Activated naive CD4-positive, alpha-beta T cell treated with anti-CD3 and anti-CD28 coated beads for 36 hours (primary cell): ENCODE measurements at regions of chr2 and their contacts with region 1.

Region 1: DNA sequence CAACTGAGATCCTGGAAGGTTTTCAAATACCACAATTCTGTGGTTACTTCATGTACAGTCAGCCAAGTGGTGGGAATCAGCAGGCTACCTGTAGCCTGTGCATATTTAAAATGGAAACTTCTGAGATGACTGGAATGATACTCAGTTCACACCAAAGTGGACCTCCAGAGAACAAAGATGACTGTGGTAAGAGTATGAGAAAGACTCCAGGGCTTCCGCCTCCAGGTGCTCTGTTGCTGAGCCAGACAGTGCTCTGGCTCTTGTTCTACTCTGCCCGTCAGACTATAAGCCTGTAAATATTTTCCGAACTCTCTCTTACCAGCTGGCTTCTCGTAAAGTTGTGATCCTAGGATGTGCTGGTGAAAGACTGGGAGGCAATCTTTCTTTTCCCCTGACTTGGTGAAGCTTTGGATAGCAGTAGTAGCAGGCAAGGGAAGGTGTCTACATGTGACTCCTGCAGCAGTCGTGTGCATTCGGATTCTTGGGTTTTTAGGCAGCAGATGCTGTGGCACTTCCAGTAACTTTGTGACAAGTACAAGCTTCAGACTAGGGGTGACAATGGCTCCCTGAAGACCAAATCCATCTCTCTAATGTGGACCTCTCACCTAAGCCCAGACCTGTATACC is 23.1 kb downstream of the ST3GAL5 start:
- DNase-seq: peak; percentile 42
- H3K4me3 Mint-ChIP-seq: no peak overlapping the region
- H3K27ac Mint-ChIP-seq: no peak overlapping the region
- H3K4me1 Mint-ChIP-seq: peaks cover 60% of the 10 kb centered on the region
- H3K27me3 Mint-ChIP-seq: no peaks in the 10 kb centered on the region

Region 2: DNA sequence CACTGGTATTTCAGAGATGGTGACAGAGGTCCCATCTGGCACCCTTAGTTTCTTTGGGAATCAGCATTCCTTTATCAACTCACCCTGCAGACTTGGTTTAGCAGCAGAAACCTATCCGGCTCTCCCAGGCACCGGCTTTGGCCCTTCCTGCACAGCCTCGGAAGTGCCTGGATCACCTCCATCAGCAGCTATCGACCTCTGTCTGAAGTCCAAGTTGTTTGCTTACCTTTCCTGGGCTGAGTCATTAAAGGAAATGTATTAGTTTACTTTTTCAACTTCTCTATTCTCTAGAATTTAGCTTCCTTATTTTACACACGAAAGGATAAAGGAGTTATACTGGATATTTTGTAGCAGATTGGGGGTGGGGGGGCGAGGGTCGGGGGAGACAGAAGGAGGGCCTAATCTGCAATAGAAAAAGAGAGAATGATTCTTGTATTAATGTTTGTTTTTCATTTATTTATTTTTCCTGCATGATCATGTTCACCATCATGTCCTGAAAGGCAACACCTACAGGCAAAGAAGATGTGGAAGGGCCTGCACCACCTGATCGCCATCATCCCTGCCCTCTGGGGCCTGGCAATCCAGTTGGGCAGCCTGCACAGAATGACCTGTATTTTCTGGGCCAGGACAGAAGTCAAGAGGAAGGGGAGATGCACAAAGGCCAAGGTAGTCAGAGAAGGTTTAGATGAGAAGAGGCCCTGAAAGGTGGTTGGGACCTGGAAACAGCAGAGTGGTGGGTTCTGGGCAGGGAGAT is 348.8 kb before region 1 on chr2:
- CTCF ChIA-PET with region 1: no interaction called
- intact Hi-C with region 1: no loop called
- DNase-seq: no peak
- H3K4me3 Mint-ChIP-seq: no peak overlapping the region
- H3K27ac Mint-ChIP-seq: no peak overlapping the region
- H3K4me1 Mint-ChIP-seq: no peaks in the 10 kb centered on the region
- H3K27me3 Mint-ChIP-seq: no peaks in the 10 kb centered on the region

Region 3: DNA sequence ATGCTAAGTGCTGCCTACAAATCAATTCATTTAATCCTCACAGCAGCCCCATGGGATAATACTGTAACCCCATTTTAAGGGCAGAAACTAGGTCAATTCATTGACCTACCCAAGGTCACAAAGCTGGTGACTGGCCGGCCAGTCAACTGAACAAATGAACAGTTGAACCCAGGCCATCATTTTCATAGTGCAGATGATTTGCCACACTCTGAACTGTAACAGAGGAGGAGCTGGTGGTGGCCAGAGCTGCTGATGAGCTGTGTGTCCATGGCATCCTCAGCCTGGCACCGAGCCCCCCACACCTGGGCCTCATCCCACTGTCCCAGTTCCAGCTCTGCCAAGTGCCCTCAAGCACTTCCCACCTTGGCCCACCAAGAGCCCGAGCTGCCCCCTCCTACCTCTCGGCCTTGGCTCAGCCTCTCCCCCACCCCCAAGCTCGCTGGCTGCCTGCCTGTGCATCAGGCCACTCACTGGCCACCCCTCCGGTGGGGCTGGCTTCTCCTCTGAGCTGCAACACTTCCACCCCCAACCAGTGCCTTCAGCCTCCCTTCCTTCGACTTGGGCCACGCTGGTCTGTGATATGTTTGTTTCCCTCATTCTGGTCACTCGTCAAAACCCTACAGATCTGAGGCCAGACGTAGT is 53.4 kb before region 1 on chr2:
- CTCF ChIA-PET with region 1: no interaction called
- intact Hi-C with region 1: no loop called
- DNase-seq: no peak
- H3K4me3 Mint-ChIP-seq: no peak overlapping the region
- H3K27ac Mint-ChIP-seq: no peak overlapping the region
- H3K4me1 Mint-ChIP-seq: no peaks in the 10 kb centered on the region
- H3K27me3 Mint-ChIP-seq: peaks cover 1% of the 10 kb centered on the region

Region 4: DNA sequence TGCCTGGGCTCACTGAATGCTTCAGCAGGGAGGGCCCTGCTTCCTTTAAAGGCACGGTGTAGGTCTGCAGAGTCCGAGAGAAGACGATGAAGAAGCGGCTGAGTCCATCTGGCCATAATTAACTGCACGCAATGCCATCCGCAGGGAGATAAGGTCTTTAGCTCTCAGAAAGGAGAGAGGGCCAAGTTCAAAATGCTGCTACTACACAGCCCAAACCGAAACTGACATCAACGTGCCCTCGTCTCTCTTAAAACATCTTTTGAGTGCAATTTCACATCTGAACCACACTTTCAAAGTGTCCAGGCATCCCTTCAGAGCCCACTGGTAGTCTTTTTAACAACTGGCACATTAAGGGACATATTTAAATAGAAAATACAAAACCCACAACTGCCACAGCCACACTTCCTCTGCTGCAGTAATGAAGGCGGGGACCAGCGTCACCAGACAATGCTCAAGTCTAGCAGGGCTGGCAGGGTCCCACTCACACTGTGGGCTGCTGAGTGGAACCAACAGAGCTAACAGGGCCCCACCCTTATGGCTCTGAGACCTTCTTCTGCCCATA is 12.6 kb before region 1 on chr2:
- CTCF ChIA-PET with region 1: interaction called, 6 read pairs
- intact Hi-C with region 1: loop called (anchors 1 kb)
- DNase-seq: peak; percentile 70
- H3K4me3 Mint-ChIP-seq: peak overlapping the region; percentile 74
- H3K27ac Mint-ChIP-seq: peak overlapping the region; percentile 98
- H3K4me1 Mint-ChIP-seq: peaks cover 70% of the 10 kb centered on the region
- H3K27me3 Mint-ChIP-seq: no peaks in the 10 kb centered on the region

Region 5: DNA sequence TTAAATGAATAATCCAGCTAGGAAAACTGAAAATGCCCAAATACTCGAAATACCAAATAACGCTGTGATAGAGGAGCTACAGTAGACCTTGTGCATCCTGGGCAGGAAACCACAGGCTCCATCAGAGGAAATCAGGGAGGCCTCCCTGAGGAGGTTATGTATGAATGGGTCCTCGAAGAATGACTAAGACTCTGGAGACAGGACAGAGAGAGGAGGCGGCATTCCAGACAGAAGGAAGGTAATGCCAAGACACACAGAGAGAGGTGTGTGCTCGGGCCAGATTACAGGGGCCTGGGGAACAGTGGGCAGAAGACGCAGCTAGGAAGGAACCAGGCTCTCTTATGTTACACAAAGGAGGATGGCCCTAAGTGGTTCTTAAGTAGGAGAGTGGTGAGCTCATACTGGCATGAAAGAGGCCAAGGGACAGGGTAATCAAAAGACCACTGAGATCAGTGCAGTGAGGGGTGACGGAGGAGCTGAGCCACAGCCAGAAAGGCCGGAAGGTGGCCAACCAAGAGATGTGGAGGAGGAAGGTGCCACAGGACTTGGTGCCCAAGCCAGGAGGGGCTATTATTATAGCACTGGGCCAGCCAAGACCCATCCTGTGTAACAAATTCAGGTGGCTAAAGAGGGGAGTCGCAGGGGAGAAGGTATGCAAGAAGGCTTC is 13.2 kb after region 1 on chr2:
- CTCF ChIA-PET with region 1: interaction called, 6 read pairs
- intact Hi-C with region 1: loop called (anchors 1 kb)
- DNase-seq: peak; percentile 31
- H3K4me3 Mint-ChIP-seq: no peak overlapping the region
- H3K27ac Mint-ChIP-seq: no peak overlapping the region
- H3K4me1 Mint-ChIP-seq: peaks cover 59% of the 10 kb centered on the region
- H3K27me3 Mint-ChIP-seq: no peaks in the 10 kb centered on the region

Region 6: GRCh38 chr2:86143926-86144685 is 278.5 kb after region 1 on chr2:
- CTCF ChIA-PET with region 1: no interaction called
- intact Hi-C with region 1: no loop called
- DNase-seq: no peak
- H3K4me3 Mint-ChIP-seq: no peak overlapping the region
- H3K27ac Mint-ChIP-seq: peak overlapping the region; percentile 12
- H3K4me1 Mint-ChIP-seq: peaks cover 8% of the 10 kb centered on the region
- H3K27me3 Mint-ChIP-seq: no peaks in the 10 kb centered on the region